Colonic mucosa (tissue), 4 donors: ENCODE measurements at regions of chr11 and their contacts with region 1.

Region 1: DNA sequence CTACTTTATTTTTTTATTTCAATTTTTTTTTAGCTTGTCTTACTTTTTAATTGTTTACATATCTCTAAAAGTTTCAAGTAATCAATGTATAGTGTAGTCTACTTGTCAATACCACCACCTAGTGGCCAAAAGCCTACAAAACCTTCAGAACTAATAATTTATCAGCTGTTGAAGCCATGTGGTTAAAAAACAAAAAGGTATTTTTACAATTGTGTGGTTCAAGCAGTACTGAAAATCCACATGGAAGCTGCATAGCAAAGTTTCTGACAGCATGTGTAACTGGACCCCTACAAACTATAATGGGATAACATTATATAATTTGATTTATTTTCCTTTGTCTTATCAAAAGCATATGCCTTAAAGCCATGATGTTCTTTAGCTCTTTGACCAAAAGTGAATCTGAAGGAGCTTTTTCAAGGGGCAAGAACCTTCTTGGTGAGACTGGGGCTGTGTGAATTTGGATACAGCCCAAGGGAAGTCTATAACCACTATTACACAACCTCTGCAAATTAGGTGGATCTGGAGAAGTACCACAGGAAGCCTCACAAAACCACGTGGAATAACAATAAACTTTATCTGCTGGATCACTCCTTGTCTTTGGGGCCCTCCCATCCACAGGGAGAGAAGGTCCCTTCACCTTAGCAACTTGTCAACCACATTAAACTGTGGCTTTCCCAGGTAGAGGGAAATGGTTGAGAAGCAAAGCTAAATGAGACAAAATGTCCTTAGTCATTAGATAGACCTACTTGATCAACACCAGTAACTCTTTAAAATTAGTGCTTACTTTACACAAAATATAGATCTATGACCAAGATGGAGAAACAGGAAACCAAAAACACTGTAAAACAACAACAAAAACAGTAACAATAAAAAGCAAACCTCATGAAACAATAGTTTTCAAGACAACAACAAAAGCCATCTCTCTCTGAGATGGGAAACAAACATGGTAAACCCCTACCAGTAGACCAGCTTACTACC is 9.9 kb downstream of the NARS2 start:
- DNase-seq: peak; percentile 68
- H3K4me3 ChIP-seq: no peak overlapping the region
- H3K27ac ChIP-seq: no peak overlapping the region
- H3K4me1 ChIP-seq: peaks cover 13% of the 10 kb centered on the region
- H3K27me3 ChIP-seq: no peaks in the 10 kb centered on the region
- CTCF ChIP-seq: peak; percentile 70

Region 2: GRCh38 chr11:78228467-78228866 is 336.3 kb before region 1 on chr11:
- intact Hi-C with region 1: loop called (anchors 2 kb)
- DNase-seq: peak; percentile 44
- H3K4me3 ChIP-seq: no peak overlapping the region
- H3K27ac ChIP-seq: no peak overlapping the region
- H3K4me1 ChIP-seq: no peaks in the 10 kb centered on the region
- H3K27me3 ChIP-seq: no peaks in the 10 kb centered on the region
- CTCF ChIP-seq: peak; percentile 48

Region 3: DNA sequence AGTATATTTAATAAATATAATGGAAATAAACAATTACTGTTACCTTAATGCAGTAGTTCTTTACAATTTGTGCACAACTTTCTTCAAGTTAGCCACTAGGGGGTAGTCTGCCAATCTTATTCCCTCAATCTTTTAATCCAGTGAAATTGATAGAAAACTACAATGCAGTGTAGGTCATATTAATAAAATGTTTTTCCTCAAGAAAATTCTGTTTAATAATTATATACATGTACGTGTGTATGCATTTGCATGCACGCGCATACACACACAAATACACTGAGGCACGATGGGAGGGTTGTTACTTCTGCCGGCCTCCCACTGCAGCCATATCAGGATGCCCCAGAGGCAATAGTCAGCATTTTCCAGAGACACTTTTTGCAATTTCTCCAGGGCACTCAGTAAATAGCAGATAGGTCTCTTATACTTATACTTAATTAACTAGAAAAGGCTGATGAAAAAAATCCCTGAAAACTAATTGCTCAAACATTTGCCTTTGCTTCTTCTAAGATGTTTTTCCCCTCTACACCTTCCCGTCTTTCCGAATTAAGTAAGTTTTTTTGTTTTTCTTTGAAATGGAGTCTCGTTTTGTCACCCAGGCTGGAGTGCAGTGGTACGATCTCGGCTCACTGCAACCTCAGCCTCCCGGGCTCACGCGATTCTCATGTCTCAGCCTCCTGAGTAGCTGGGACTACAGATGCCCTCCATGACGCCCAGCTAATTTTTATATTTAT is 150.3 kb before region 1 on chr11:
- intact Hi-C with region 1: loop called (anchors 5 kb)
- DNase-seq: no peak
- H3K4me3 ChIP-seq: no peak overlapping the region
- H3K27ac ChIP-seq: no peak overlapping the region
- H3K4me1 ChIP-seq: no peaks in the 10 kb centered on the region
- H3K27me3 ChIP-seq: no peaks in the 10 kb centered on the region
- CTCF ChIP-seq: peak; percentile 69